ENCODE measurements at regions of chr4 and their contacts with region 1.

Region 1: DNA sequence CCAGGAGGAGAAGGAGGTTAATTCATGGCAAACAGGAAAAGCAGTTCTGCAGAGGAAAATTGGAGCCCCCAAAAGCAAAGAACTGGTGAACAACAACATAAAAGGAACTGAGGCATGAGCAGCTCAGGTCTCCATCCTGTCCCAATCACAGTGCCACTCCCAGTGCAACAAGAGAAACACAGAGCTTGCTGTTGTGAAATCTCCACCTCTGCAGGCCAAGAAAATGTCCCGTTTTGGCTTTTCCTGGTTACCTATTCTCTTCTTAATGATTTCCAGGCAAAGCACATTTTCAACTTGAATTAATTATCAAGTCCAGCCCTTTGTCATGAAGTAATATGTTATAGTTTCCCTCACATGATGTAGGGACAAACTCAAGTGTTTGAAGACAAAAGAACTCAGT is 778 bp downstream of the C1QTNF7 start:
- DNase-seq: no peak
- H3K4me3 Mint-ChIP-seq: no peak overlapping the region
- H3K27ac Mint-ChIP-seq: no peak overlapping the region
- H3K4me1 Mint-ChIP-seq: peaks cover 25% of the 10 kb centered on the region
- H3K27me3 Mint-ChIP-seq: no peaks in the 10 kb centered on the region

Region 2: GRCh38 chr4:15375667-15376066 is 52.9 kb before region 1 on chr4:
- CTCF ChIA-PET with region 1: no interaction called
- intact Hi-C with region 1: loop called (anchors 1 kb)
- DNase-seq: no peak
- H3K4me3 Mint-ChIP-seq: no peak overlapping the region
- H3K27ac Mint-ChIP-seq: peak overlapping the region; percentile 12
- H3K4me1 Mint-ChIP-seq: peaks cover 26% of the 10 kb centered on the region
- H3K27me3 Mint-ChIP-seq: no peaks in the 10 kb centered on the region

Measured in activated naive CD4-positive, alpha-beta T cell treated with anti-CD3 and anti-CD28 coated beads for 36 hours (primary cell).